ENCODE measurements at regions of chr2 and their contacts with region 1.

Region 1: DNA sequence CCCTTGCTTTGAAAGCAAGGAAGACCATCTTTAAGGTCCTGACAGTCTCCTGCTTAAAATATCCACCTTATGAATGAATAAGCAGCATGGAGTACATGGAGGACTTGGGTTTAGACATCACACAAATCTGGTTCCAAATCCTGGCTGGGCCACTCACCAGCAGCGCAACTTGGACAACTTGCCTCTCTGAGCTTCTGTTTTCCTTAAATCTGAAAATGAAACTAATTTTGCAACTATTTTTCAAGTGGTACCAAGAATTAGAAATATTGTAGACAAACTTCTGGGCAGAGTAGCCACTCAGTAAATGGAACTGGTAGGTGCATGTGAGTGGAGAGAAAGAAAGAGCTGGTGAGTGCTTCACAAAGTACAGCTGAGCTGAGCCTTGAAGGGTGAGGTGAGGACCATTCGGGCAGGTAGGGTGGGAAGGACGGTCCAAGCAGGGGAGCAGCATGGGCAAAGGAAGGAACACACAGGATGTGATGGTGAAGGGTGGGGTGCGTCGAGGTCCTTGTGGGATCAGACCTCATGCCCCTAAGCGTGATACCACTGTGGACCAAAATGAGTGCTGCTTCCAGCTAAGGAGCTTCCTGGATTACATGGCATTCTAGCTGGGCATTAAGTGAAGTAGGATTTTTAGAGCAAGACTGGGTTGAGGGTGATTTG is 14.4 kb upstream of the TET3 start:
- DNase-seq: no peak
- H3K4me3 ChIP-seq: no peak overlapping the region
- H3K4me3 Mint-ChIP-seq: no peak overlapping the region
- H3K27ac Mint-ChIP-seq: no peak overlapping the region
- H3K4me1 ChIP-seq: no peaks in the 10 kb centered on the region
- H3K4me1 Mint-ChIP-seq: no peaks in the 10 kb centered on the region
- H3K27me3 ChIP-seq: no peaks in the 10 kb centered on the region; the same call in none of the 2 replicates
- H3K27me3 Mint-ChIP-seq: peaks cover 6% of the 10 kb centered on the region
- CTCF ChIP-seq: no peak

Region 2: DNA sequence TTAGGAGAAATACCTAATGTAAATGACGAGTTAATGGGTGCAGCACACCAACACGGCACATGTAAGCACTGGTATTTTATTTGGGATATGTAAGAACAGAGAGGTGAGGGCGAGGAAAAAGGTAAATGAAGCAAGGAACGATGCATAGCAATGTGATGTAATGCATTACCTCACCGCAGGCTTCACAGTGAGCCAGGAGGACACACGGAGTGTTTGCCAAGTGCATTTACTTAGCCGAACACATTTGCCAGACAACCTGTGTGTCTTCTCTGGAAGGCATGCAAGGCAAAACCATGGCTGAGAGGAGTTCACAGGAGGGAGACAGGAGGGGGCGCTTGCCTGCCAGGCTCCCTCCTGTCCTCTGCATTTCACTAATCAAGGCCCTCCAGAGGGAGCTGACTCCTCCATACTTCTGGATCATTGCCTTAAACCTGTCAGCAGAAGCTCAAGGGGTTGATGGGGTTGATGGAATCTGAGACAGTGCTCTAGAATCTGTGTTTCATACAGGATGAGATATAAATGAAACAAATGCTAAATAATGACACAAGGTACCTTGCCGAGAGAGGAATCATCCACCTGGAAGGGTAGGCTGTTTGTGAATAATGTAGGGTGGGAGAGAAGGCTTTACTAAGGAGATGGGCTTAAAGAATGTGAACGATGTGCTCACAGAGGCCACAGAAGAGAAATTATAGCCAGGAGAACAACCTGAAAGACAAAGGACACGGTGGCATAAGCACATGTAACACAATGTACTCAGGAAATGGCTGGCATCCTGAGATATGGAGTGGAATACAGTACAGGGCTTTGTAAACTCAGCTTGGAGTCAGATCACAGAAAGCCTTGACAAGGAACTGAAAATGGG is 224.0 kb before region 1 on chr2:
- CTCF ChIA-PET with region 1: no interaction called
- POLR2A ChIA-PET with region 1: interaction called, 13 read pairs
- intact Hi-C with region 1: no loop called
- DNase-seq: no peak
- H3K4me3 ChIP-seq: no peak overlapping the region
- H3K4me3 Mint-ChIP-seq: no peak overlapping the region
- H3K27ac Mint-ChIP-seq: no peak overlapping the region
- H3K4me1 ChIP-seq: no peaks in the 10 kb centered on the region
- H3K4me1 Mint-ChIP-seq: no peaks in the 10 kb centered on the region
- H3K27me3 ChIP-seq: no peaks in the 10 kb centered on the region
- H3K27me3 Mint-ChIP-seq: no peaks in the 10 kb centered on the region
- CTCF ChIP-seq: no peak

Region 3: GRCh38 chr2:74037379-74037860 is 67.1 kb after region 1 on chr2:
- CTCF ChIA-PET with region 1: no interaction called
- POLR2A ChIA-PET with region 1: no interaction called
- intact Hi-C with region 1: no loop called
- DNase-seq: no peak
- H3K4me3 ChIP-seq: no peak overlapping the region
- H3K4me3 Mint-ChIP-seq: no peak overlapping the region
- H3K27ac Mint-ChIP-seq: no peak overlapping the region
- H3K4me1 ChIP-seq: peaks cover 16% of the 10 kb centered on the region
- H3K4me1 Mint-ChIP-seq: peaks cover 12% of the 10 kb centered on the region
- H3K27me3 ChIP-seq: no peaks in the 10 kb centered on the region
- H3K27me3 Mint-ChIP-seq: no peaks in the 10 kb centered on the region
- CTCF ChIP-seq: no peak